SK-N-SH (cell line): ENCODE measurements at regions of chr3 and their contacts with region 1.

Region 1: DNA sequence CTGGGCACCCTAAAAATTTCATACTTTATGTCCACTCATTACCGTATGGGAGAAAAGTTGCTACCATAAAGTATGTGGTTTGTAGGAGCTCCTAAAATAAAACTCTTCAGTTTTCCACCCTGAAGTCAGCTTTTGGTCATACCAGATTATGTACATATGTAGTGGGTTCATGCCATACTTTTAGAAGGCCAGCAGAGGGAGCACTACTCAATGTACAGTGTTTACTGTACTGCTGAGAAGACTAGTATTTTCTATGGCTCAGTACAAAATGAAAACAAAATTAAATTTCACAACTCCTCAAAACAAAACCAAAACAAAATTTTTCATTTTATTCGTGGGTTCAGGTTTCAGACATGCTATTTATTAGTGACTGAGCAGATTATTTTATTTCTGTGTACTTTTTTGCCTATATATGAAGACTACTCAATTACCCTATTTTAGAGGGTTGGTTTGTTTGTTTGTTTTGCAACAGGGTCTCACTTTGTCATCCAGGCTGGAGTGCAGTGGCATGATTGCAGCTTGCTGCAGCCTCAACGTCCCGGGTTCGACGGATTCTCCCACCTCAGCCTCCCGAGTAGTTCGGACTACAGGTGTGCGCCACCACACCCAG is 24.3 kb downstream of the NXPE3 start:
- DNase-seq: peak; percentile 56
- H3K4me3 ChIP-seq: no peak overlapping the region; a peak in 1 of 4 replicates
- H3K27ac ChIP-seq: no peak overlapping the region
- H3K4me1 ChIP-seq: no peaks in the 10 kb centered on the region
- H3K27me3 ChIP-seq: no peaks in the 10 kb centered on the region
- CTCF ChIP-seq: peak; percentile 95
- EP300 ChIP-seq: no peak
- RAD21 ChIP-seq: peak; percentile 63

Region 2: GRCh38 chr3:101784855-101785613 is 18.2 kb before region 1 on chr3:
- CTCF ChIA-PET with region 1: interaction called, 26 read pairs
- POLR2A ChIA-PET with region 1: no interaction called
- DNase-seq: no peak
- H3K4me3 ChIP-seq: no peak overlapping the region
- H3K27ac ChIP-seq: no peak overlapping the region
- H3K4me1 ChIP-seq: peaks cover 0 to 17% of the 10 kb centered on the region in 2 experiments; a peak in 2 of 4 replicates
- H3K27me3 ChIP-seq: no peaks in the 10 kb centered on the region
- CTCF ChIP-seq: no peak
- EP300 ChIP-seq: no peak
- RAD21 ChIP-seq: no peak

Region 3: DNA sequence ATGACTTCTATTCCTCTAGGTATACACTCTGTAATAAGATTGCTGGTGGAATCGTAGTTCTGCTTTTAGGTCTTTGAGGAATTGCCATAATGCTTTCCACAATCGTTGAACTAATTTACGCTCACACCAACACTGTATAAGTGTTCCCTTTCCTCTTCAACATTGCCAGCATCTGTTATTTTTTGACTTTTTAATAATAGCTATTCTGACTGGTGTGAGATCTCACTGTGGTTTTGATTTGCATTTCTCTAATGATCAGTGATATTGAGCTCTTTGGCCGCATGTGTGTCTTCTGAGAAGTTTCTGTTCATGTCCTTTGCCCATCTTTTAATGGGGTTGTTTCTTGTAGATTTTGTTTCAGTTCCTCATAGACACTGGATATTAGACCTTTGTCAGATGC is 11.5 kb before region 1 on chr3:
- CTCF ChIA-PET with region 1: interaction called, 26 read pairs
- POLR2A ChIA-PET with region 1: no interaction called
- DNase-seq: no peak
- H3K4me3 ChIP-seq: no peak overlapping the region
- H3K27ac ChIP-seq: no peak overlapping the region
- H3K4me1 ChIP-seq: no peaks in the 10 kb centered on the region
- H3K27me3 ChIP-seq: no peaks in the 10 kb centered on the region
- CTCF ChIP-seq: no peak
- EP300 ChIP-seq: no peak
- RAD21 ChIP-seq: no peak

Region 4: GRCh38 chr3:101816215-101817149 is 13.2 kb after region 1 on chr3:
- CTCF ChIA-PET with region 1: interaction called, 16 read pairs
- POLR2A ChIA-PET with region 1: no interaction called
- DNase-seq: no peak
- H3K4me3 ChIP-seq: no peak overlapping the region
- H3K27ac ChIP-seq: peak overlapping the region in 1 of 2 experiments; percentile 16; a peak in 2 of 4 replicates
- H3K4me1 ChIP-seq: peaks cover 0 to 3% of the 10 kb centered on the region in 2 experiments; a peak in 3 of 4 replicates
- H3K27me3 ChIP-seq: no peaks in the 10 kb centered on the region
- CTCF ChIP-seq: no peak
- EP300 ChIP-seq: no peak
- RAD21 ChIP-seq: no peak